ENCODE measurements at regions of chr14 and their contacts with region 1.

Region 1: GRCh38 chr14:89954070-89955028 is at the start of gene EFCAB11:
- DNase-seq: peak; percentile 83 to 93
- H3K4me3 ChIP-seq: peak within 1 kb of the TSS; percentile 66
- H3K27ac ChIP-seq: peak within 1 kb of the TSS; percentile 44
- H3K4me1 ChIP-seq: peaks cover 20% of the 10 kb centered on the region; the same call in 1 of the 2 replicates
- H3K27me3 ChIP-seq: no peaks in the 10 kb centered on the region
- CTCF ChIP-seq: peak; percentile 38; the same call in 1 of the 2 replicates
- total RNA-seq, gene EFCAB11: 8.4 and 10.3 TPM in 2 replicates

Region 2: GRCh38 chr14:90758028-90758889 is 803.9 kb after region 1 on chr14:
- CTCF ChIA-PET with region 1: no interaction called
- POLR2A ChIA-PET with region 1: no interaction called
- intact Hi-C with region 1: loop called (anchors 10 kb)
- DNase-seq: peak; percentile 67 to 78
- H3K4me3 ChIP-seq: peak overlapping the region; percentile 53; the same call in 1 of the 2 replicates
- H3K27ac ChIP-seq: no peak overlapping the region
- H3K4me1 ChIP-seq: no peaks in the 10 kb centered on the region
- H3K27me3 ChIP-seq: no peaks in the 10 kb centered on the region
- CTCF ChIP-seq: peak; percentile 70

Measured in PC-9 (cell line).